Dendritic cell treated with granulocyte-macrophage colony-stimulating factor and Interleukin-4, amounts not matched to agents 40 ng/mL and 50 ng/mL, for 4 days (primary cell): ENCODE measurements at regions of chr1 and their contacts with region 1.

Region 1: DNA sequence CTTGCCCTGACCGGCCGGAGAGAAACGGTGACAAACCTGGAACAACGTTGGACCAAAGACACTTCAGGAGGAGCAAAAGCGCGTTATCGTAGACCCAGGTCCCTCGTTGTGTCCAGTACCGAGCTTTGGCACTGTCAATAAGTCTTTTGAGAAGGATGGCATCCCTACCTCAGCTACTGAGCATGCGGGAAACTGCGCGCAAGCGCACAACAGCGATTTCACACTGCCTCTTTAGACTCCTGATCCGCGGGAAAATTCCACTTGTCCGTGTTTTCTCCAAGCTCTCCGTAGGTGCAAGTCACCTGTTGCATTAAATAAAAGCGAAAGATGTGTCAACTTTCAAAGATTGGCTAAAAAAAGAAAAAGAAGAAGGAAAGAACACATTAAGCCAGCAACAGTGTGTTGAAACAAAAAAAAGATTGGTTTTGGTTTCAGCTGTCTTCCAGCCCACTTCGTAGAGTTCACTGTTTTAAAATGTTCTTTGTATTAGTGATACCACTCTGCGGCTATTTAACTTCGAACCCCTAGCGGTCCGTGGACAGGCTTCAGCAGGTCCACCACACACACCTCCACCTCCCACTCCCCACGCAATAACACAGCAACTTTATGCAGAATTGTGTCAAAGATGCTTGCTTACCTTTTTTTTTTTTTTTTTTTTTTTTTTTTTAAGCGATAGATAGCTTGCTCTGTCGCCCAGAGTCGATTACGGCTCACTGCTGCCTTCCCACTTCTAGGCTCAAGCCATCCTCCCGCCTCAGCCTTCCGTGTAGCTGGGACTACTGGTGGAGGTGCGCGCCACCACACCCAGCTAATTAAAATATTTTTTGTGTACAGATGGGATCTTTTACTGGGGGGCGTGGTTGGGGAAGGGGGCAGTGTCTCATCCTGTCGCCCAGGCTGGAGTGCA is at the start of gene BPNT1:
- H3K4me3 Mint-ChIP-seq: peak within 1 kb of the TSS; percentile 97
- H3K27ac Mint-ChIP-seq: peak within 1 kb of the TSS; percentile 85
- H3K4me1 Mint-ChIP-seq: peaks cover 6% of the 10 kb centered on the region
- H3K27me3 Mint-ChIP-seq: no peaks in the 10 kb centered on the region

Region 2: DNA sequence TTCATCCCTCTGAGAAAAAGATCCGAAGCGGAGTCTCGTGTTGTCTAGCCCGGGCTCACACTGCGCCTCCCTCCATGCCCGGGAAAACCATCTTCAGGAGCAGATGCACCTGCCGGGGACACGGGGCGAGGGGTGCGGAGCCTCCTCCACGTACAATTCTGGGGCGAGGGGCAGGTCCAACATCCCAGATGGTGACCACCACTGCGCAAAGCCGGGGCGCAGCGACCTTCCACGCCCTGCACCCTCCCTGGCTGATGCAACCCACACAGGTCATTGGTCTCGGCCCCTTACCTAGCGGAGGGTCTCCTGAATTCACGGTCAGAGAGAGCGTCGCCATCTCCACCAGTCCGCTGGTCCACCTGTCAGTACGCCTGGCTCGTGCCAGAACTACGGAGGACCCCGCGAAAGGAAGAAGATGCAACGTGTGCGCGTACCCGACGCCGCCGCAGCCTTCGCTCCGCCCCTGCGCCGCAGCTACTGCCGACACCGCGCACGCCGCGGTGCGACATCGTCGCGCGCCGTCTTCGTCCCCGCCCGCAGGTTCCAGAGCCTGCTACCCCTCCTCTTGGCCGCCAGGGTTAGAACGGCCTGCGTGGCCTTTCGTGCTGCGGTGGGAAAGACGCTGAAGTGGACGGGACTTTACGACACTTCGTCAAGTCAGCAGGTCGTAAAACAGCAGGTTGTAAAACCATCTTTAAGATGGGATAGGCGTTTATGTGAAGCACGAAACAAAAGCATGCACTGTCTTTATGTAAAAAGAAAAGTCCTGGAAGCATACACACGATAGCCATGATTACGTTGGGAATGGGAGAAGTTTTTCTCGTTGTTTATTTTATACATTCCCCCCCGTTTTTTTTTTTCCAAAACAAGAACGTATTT is 43.6 kb before region 1 on chr1 and contains the start of gene EPRS1:
- intact Hi-C with region 1: loop called (anchors 1 kb)
- H3K4me3 Mint-ChIP-seq: peak within 1 kb of the TSS; percentile 92
- H3K27ac Mint-ChIP-seq: peak within 1 kb of the TSS; percentile 90
- H3K4me1 Mint-ChIP-seq: peaks cover 20% of the 10 kb centered on the region
- H3K27me3 Mint-ChIP-seq: no peaks in the 10 kb centered on the region

Region 3: DNA sequence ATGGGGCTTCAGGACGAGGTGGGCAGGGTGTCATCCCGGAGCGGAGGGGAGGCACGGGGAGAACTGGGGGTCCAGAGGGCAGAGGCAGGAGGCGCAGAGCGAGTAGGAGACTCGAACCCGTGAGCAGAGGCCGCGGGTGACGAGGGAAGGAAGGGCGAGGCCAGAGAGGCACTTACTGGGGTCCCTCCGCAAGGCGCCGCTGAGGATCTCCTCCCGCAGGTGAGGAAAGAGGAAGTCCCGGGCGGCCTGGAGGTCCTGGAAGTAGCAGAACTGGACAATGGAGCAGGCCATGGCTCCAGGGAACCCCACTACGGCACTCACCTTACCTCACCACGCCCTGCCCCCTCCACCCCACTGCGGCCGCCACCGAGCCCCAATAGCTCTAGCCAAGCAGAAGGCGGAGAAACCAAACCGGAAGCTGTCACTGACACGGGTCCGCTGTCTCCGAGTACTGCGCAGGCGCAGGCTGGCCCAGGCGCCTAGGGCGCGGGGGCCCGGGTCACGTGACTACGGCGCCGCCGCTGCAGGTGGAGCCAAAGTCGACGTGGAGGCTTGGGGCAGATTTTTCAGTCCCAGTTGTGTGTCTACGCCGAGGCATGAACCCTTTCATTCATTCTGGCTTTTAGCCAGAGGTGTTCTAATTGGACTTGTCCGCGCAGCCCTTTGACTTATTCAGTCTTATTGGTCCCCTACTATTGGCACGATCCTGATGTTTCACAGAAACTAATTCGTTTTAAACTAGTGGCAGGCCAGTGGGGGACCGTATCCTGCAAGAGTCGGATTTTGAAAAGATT is 182.3 kb after region 1 on chr1 and contains the start of gene RAB3GAP2:
- intact Hi-C with region 1: loop called (anchors 5 kb)
- H3K4me3 Mint-ChIP-seq: no peak within 1 kb of the TSS
- H3K27ac Mint-ChIP-seq: no peak within 1 kb of the TSS
- H3K4me1 Mint-ChIP-seq: peaks cover 7% of the 10 kb centered on the region
- H3K27me3 Mint-ChIP-seq: no peaks in the 10 kb centered on the region